ENCODE measurements at regions of chr5 and their contacts with region 1.

Region 1: GRCh38 chr5:140145818-140146522 is 20.2 kb downstream of the IGIP start:
- DNase-seq: peak; percentile 61 to 83 (median 80)
- H3K4me3 ChIP-seq: peak overlapping the region; percentile 18 to 79 (median 58)
- H3K27ac ChIP-seq: no peak overlapping the region
- H3K4me1 ChIP-seq: peaks cover 0 to 14% (median 12%) of the 10 kb centered on the region in 4 experiments
- H3K27me3 ChIP-seq: peaks cover 2 to 39% (median 26%) of the 10 kb centered on the region in 5 experiments

Region 2: DNA sequence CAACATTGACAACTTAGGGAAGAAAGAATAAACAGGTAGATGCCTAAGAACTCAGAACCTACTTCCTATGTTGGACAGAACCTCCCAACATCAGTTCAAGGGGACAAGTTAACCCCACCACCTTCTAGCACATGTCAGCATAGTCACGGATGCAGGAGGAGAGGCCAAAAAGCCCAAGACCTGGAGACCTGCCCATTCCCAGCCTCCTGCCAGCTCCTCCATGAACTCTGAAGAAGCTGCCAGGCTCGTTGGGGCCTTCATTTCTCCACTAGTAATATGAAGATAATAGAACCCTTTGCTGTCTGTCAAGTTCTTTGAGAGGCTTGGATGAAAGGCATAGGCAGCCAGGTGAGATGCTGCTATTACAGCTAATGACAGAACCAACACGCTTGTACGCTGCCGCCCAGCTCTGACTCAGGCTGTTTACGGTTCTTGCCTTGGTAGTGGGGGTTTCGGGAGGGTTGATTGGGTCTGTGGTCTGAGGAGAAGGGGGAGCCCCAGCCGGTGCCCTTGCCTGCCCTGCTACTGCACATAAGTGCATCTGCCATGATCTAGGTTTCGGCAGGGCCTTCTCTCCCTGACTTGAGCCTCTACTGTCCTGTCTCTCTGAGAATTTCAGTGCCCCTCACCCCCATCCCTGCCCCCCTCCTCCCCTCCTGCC is 185.1 kb before region 1 on chr5:
- CTCF ChIA-PET with region 1: no interaction called
- POLR2A ChIA-PET with region 1: no interaction called
- DNase-seq: no peak
- H3K4me3 ChIP-seq: no peak overlapping the region
- H3K27ac ChIP-seq: no peak overlapping the region
- H3K4me1 ChIP-seq: no peaks in the 10 kb centered on the region
- H3K27me3 ChIP-seq: peaks cover 0 to 22% (median 3%) of the 10 kb centered on the region in 5 experiments

Region 3: DNA sequence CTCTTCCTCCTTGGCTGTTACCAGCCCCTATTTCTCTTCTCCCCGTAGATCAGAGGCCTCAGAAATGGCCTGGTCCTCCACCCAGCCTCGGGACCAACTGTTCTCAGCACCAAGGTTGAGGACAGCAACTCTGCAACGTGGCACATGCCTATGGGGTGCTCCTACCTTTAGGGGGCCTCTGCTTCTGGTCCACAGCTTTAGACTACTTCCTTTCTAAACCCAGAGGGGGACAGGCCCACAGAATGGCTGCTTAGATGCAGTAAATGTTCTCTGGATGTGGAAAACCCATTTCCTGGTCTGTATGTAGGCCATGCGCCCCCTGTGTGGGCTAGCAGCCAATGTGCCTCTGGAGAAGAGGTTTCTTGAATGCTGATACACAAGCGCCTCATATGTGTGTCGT is 171.3 kb before region 1 on chr5:
- CTCF ChIA-PET with region 1: no interaction called
- POLR2A ChIA-PET with region 1: no interaction called
- DNase-seq: peak in 2 of 3 donors; percentile 58
- H3K4me3 ChIP-seq: no peak overlapping the region
- H3K27ac ChIP-seq: no peak overlapping the region
- H3K4me1 ChIP-seq: no peaks in the 10 kb centered on the region
- H3K27me3 ChIP-seq: peaks cover 0 to 15% (median 3%) of the 10 kb centered on the region in 5 experiments

Region 4: DNA sequence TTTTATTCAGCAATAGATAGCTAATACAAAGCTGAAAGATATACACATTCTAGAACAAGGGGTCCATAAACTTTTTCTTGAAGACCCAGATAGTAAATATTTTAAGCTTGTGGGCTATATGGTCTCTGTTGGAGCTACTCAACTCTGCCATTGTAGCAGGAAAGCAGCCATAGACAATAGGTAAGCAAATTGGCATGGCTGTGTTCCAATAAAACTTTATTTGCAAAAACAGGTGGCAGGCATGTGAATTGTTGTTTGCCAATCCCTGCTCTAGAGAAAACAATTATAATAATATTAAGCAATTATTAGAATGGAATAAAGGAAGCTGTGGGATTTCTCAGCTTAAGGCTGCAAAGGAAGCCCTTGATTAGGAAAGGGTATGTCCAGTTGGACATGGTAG is 64.9 kb before region 1 on chr5:
- CTCF ChIA-PET with region 1: interaction called, 142 read pairs
- POLR2A ChIA-PET with region 1: no interaction called
- DNase-seq: no peak
- H3K4me3 ChIP-seq: no peak overlapping the region
- H3K27ac ChIP-seq: no peak overlapping the region
- H3K4me1 ChIP-seq: no peaks in the 10 kb centered on the region
- H3K27me3 ChIP-seq: peaks cover 7 to 23% (median 16%) of the 10 kb centered on the region in 5 experiments

Region 5: GRCh38 chr5:140113699-140114263 is 32.2 kb before region 1 on chr5 and contains the start of gene PURA:
- CTCF ChIA-PET with region 1: interaction called, 34 read pairs
- POLR2A ChIA-PET with region 1: no interaction called
- DNase-seq: peak; percentile 94 to 97 (median 97)
- H3K4me3 ChIP-seq: peak within 1 kb of the TSS; percentile 75 to 93 (median 87)
- H3K27ac ChIP-seq: peak within 1 kb of the TSS; percentile 40 to 76
- H3K4me1 ChIP-seq: peaks cover 6 to 57% (median 37%) of the 10 kb centered on the region in 4 experiments
- H3K27me3 ChIP-seq: peaks cover 14 to 40% (median 23%) of the 10 kb centered on the region in 5 experiments

Region 6: GRCh38 chr5:140131967-140132409 is 14.0 kb before region 1 on chr5:
- CTCF ChIA-PET with region 1: interaction called, 74 read pairs
- POLR2A ChIA-PET with region 1: no interaction called
- DNase-seq: peak in 2 of 3 donors; percentile 69 to 70
- H3K4me3 ChIP-seq: no peak overlapping the region
- H3K27ac ChIP-seq: no peak overlapping the region
- H3K4me1 ChIP-seq: peaks cover 0 to 9% (median 8%) of the 10 kb centered on the region in 4 experiments
- H3K27me3 ChIP-seq: peaks cover 0 to 2% (median 0%) of the 10 kb centered on the region in 5 experiments

Region 7: GRCh38 chr5:140169410-140169809 is 23.4 kb after region 1 on chr5:
- CTCF ChIA-PET with region 1: interaction called, 15 read pairs
- POLR2A ChIA-PET with region 1: no interaction called
- DNase-seq: no peak
- H3K4me3 ChIP-seq: no peak overlapping the region
- H3K27ac ChIP-seq: no peak overlapping the region
- H3K4me1 ChIP-seq: peaks cover 2 to 6% (median 3%) of the 10 kb centered on the region in 4 experiments
- H3K27me3 ChIP-seq: peaks cover 0 to 3% (median 0%) of the 10 kb centered on the region in 5 experiments